ENCODE measurements at regions of chr2 and their contacts with region 1.

Region 1: DNA sequence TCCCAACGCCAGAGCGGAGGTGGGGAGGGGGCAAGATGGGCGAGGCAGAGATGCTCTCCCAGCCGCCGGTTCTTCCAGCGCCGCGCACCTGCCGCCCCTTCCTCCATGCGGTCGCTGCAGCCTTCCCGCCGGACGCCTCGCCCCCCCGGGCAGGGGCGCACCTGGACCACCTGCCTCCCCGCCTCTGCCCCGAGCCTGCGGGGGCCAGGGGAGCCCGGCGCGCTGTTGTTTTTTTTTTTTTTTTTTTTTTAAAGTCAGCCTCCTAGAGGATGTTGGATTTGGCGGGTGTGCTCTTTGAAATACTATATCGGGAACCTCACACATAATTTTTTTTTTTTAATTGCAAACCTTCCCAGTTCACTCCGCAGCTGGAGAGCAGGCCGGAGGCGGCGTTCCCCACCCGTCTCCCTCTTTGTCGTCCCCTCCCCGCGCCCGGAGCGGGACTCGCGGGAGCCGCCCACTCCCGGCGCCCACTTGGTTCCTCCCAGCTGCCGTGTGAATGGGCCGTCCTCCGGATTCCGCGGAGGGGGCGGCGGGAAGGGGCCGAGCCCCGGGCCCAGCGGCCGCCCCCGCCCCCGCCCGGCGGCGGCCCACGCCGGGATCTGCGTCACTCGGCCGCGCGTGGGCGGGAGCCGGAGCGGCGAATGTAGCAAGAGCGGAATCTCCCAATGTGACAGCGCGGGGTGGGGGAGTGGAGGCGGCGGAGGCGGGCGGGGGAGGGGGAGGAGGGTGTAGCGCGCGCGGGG is 421 bp upstream of the NAB1 start:
- DNase-seq: peak; percentile 90 to 97
- ATAC-seq: peak; percentile 77 to 93 (median 83)
- H3K4me3 ChIP-seq: peak overlapping the region; percentile 91
- H3K4me3 Mint-ChIP-seq: peak overlapping the region; percentile 95
- H3K27ac ChIP-seq: peak overlapping the region; percentile 82
- H3K27ac Mint-ChIP-seq: peak overlapping the region; percentile 86 to 90
- H3K4me1 ChIP-seq: peaks cover 14% of the 10 kb centered on the region
- H3K4me1 Mint-ChIP-seq: peaks cover 19 to 27% of the 10 kb centered on the region in 2 donors
- H3K27me3 ChIP-seq: no peaks in the 10 kb centered on the region
- H3K27me3 Mint-ChIP-seq: no peaks in the 10 kb centered on the region
- CTCF ChIP-seq: no peak

Region 2: GRCh38 chr2:190408538-190409271 is 239.8 kb before region 1 on chr2:
- intact Hi-C with region 1: loop called (anchors 5 kb)
- DNase-seq: peak; percentile 59 to 91
- ATAC-seq: peak; percentile 69 to 85 (median 79)
- H3K4me3 ChIP-seq: peak overlapping the region; percentile 92
- H3K4me3 Mint-ChIP-seq: peak overlapping the region; percentile 90
- H3K27ac ChIP-seq: peak overlapping the region; percentile 97
- H3K27ac Mint-ChIP-seq: peak overlapping the region in 1 of 2 donors; percentile 83
- H3K4me1 ChIP-seq: peaks cover 19% of the 10 kb centered on the region
- H3K4me1 Mint-ChIP-seq: peaks cover 25 to 31% of the 10 kb centered on the region in 2 donors
- H3K27me3 ChIP-seq: no peaks in the 10 kb centered on the region
- H3K27me3 Mint-ChIP-seq: no peaks in the 10 kb centered on the region
- CTCF ChIP-seq: no peak

Region 3: DNA sequence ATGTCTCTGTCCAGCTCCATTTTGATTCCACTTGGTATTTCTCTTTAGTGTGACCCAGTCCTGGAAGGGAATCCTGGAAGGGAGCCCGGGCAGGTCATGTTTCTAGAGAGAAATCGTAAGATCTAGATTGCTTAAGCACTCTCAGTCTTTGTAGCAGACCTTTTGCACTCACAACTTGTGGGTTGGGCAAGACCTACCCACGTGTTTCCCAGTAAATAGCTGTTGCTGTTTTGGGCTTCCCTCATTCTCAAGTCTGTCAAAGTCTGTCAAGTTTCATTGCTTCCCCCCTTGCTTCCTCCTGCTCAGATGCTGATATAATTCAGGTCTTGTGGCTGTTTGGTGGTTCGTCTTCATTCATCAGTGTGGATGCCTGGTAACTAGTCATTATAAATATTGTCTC is 96.5 kb before region 1 on chr2:
- intact Hi-C with region 1: loop called (anchors 5 kb)
- DNase-seq: peak in 1 of 2 donors; percentile 60
- ATAC-seq: peak; percentile 94 to 97 (median 97)
- H3K4me3 ChIP-seq: no peak overlapping the region
- H3K4me3 Mint-ChIP-seq: peak overlapping the region; percentile 60
- H3K27ac ChIP-seq: no peak overlapping the region
- H3K27ac Mint-ChIP-seq: peak overlapping the region; percentile 83 to 92
- H3K4me1 ChIP-seq: peaks cover 10% of the 10 kb centered on the region
- H3K4me1 Mint-ChIP-seq: peaks cover 14 to 15% of the 10 kb centered on the region in 2 donors
- H3K27me3 ChIP-seq: no peaks in the 10 kb centered on the region
- H3K27me3 Mint-ChIP-seq: no peaks in the 10 kb centered on the region
- CTCF ChIP-seq: no peak

Region 4: GRCh38 chr2:190682168-190682567 is 33.7 kb after region 1 on chr2:
- intact Hi-C with region 1: no loop called
- DNase-seq: no peak
- ATAC-seq: no peak
- H3K4me3 ChIP-seq: no peak overlapping the region
- H3K4me3 Mint-ChIP-seq: no peak overlapping the region
- H3K27ac ChIP-seq: no peak overlapping the region
- H3K27ac Mint-ChIP-seq: peak overlapping the region in 1 of 2 donors; percentile 23
- H3K4me1 ChIP-seq: peaks cover 3% of the 10 kb centered on the region
- H3K4me1 Mint-ChIP-seq: peaks cover 10 to 14% of the 10 kb centered on the region in 2 donors
- H3K27me3 ChIP-seq: no peaks in the 10 kb centered on the region
- H3K27me3 Mint-ChIP-seq: no peaks in the 10 kb centered on the region
- CTCF ChIP-seq: no peak